Activated naive CD4-positive, alpha-beta T cell treated with anti-CD3 and anti-CD28 coated beads for 36 hours (primary cell): ENCODE measurements at regions of chr20 and their contacts with region 1.

Region 1: GRCh38 chr20:63009045-63009961 is 2.5 kb upstream of the BHLHE23 start:
- DNase-seq: peak; percentile 86
- H3K4me3 Mint-ChIP-seq: no peak overlapping the region
- H3K27ac Mint-ChIP-seq: no peak overlapping the region
- H3K4me1 Mint-ChIP-seq: peaks cover 27% of the 10 kb centered on the region
- H3K27me3 Mint-ChIP-seq: peaks cover 51% of the 10 kb centered on the region

Region 2: DNA sequence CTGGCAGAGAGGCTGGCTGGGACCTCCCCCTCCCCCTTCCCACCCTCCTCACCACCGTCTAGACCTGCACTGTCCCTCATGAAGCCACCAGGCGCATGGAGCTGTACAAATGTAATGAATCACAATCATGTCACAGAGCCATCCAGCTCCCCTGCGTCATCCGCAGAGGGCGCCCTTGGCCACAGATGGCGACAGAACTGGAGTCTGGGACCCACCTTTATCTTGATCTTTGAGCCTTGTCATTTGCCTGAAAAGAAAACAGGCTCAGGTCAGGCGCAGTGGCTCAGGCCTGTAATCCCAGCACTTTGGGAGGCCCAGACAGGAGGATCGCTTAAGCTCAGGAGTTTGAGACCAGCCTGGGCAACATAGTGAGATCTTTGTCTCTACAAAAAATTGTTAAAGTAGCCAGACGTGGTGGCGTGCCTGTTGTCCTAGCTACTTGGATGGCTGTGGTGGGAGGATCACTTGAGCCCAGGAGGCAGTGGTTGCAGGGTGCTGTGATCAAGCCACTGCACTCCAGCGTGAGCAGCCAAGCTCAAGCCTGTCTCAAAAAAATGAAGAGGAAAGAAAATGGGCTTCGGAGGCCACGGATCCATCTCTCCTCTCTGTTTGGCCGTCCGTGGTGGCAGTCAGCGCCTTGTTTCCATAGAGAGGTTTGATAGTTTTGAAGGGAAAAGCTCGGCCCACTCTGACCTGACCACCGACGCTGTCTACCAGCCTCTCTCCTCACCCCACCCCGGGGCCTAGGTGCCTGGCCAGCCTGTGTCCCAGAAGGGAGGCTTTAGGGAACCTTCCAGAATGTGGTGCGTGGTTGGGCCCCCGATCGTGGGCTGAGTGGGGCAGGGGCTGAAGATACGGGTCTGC is 186.3 kb before region 1 on chr20:
- CTCF ChIA-PET with region 1: interaction called, 5 read pairs
- intact Hi-C with region 1: loop called (anchors 2 kb)
- DNase-seq: peak; percentile 59
- H3K4me3 Mint-ChIP-seq: no peak overlapping the region
- H3K27ac Mint-ChIP-seq: no peak overlapping the region
- H3K4me1 Mint-ChIP-seq: no peaks in the 10 kb centered on the region
- H3K27me3 Mint-ChIP-seq: peaks cover 7% of the 10 kb centered on the region

Region 3: DNA sequence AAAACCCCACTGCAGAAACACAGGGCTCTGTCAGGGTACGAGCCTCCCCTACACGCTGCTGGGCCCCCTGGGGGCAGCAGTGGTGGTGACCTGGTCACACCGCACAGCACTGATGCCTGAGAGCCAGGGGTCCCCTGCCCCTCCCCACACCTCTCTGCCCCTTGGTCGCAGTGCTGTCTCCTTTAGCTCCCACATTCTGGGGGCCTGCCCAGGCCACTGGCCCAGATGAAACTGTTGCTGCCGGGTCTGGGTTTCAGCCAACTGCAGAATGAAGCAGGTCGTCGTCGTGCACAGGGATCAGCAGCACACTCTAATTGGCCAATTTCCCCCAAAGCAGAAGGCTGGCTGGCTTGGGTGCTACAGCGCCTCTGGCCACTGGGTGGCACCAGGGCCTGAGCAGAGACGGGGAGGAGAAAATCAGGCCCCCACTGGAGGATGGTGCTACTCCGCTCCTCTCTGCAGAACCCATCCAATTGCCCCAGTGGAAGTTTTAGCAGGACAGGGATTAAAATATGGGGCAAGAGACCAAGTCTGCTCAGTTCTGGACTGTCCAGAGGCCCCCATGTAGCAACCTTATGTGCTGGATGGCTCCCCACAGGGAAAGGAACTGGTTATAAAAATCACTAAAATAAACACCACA is 109.1 kb before region 1 on chr20:
- CTCF ChIA-PET with region 1: interaction called, 4 read pairs
- intact Hi-C with region 1: loop called (anchors 1 kb)
- DNase-seq: peak; percentile 84
- H3K4me3 Mint-ChIP-seq: no peak overlapping the region
- H3K27ac Mint-ChIP-seq: peak overlapping the region; percentile 72
- H3K4me1 Mint-ChIP-seq: peaks cover 29% of the 10 kb centered on the region
- H3K27me3 Mint-ChIP-seq: no peaks in the 10 kb centered on the region

Region 4: DNA sequence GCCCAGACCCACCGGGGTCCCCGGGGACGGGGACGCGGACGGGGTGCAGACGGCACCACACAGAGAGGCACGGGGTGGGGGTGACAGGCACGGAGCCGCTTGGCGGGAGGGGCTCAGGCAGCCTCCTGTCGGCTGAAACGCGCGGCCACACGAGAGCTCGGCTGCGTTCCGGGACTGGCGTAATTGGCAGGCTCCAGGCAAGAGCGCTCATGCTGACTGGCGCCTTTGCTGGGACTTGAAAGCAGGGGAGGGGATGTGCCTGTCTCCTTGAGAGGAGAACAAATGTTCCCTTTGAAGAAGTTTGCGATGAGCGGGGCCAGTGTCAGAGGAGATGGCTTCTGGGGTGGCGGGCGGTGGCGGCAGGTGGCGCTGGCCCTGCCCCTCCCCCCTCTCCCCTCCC is 28.3 kb before region 1 on chr20:
- CTCF ChIA-PET with region 1: interaction called, 13 read pairs
- intact Hi-C with region 1: no loop called
- DNase-seq: peak; percentile 63
- H3K4me3 Mint-ChIP-seq: no peak overlapping the region
- H3K27ac Mint-ChIP-seq: no peak overlapping the region
- H3K4me1 Mint-ChIP-seq: peaks cover 36% of the 10 kb centered on the region
- H3K27me3 Mint-ChIP-seq: peaks cover 23% of the 10 kb centered on the region

Region 5: DNA sequence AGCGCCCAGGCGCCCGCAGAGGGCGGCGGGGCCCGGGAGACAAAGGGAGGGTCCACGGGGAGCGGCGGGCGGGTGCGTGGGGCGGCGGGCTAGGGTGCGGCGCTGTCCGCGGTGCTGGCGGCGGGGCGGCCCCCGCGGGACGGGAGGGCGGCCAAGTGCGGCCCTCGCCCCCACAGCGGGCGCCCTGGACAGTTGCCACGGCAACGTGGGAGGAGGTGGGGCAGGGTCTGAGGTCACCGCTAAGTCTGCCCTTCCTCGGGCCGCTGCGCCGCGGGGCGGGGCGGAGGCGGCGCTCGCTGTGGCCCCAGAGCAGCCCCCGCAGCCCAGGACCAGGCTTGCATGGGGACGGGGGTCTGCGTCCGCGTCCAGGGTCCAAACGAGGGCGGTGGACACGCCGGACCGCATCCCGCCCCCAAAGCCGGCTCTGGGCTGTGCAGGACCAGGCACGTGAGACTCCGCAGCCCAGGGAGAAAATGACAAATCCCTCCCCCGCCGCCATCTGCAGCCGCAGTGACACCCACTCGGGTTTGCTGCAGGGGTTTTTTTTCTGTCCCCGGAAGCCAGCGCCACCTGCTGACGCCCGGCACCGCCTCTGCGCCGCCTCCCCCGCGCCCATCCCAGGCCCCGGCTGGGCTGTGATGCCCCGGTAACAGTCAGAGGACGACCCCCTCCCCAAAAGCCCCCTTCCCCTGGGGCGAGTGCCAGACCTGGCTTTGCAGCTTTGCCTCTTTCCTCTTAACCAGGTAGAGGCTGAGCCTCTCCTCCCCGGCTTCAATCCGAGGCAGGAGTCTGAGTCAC is 169.8 kb after region 1 on chr20:
- CTCF ChIA-PET with region 1: no interaction called
- intact Hi-C with region 1: loop called (anchors 5 kb)
- DNase-seq: peak; percentile 69
- H3K4me3 Mint-ChIP-seq: no peak overlapping the region
- H3K27ac Mint-ChIP-seq: no peak overlapping the region
- H3K4me1 Mint-ChIP-seq: peaks cover 14% of the 10 kb centered on the region
- H3K27me3 Mint-ChIP-seq: peaks cover 29% of the 10 kb centered on the region